HAP-1 (cell line): ENCODE measurements at regions of chr13 and their contacts with region 1.

Region 1: GRCh38 chr13:77599351-77599750 is 63.8 kb downstream of the SCEL start:
- DNase-seq: peak in 1 of 2 experiments; percentile 14
- H3K4me3 ChIP-seq: no peak overlapping the region
- H3K4me1 ChIP-seq: peaks cover 9% of the 10 kb centered on the region; the same call in 1 of the 2 replicates
- H3K27me3 ChIP-seq: no peaks in the 10 kb centered on the region

Region 2: DNA sequence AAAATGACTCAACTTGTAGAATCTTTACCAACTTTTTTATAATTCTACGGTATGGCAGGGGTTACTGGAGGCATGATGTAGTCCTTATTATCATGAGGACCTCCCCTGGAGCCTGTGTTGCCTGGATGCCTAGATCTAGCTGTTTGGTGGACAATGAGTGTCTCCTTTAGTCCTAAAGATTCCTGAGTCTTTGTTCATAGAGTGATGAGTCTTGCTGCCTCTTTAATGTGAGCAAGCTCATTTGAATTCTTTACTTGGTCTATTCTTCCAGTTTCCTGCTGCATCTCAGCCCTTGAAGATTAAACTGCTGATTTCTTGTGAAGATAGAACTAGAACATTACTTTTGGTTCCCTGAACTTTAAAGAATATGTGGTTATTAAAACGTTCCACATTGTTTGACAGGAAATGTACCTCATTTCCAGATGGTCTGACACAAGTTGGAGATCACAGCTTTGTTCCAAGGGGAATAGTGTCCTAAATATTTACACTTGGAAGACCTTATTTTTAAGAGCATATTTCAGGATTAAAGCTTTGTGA is 150.1 kb after region 1 on chr13:
- in situ Hi-C with region 1: loop called (anchors 5 kb)
- DNase-seq: no peak
- H3K4me3 ChIP-seq: no peak overlapping the region
- H3K4me1 ChIP-seq: no peaks in the 10 kb centered on the region
- H3K27me3 ChIP-seq: no peaks in the 10 kb centered on the region